BJ (cell line): ENCODE measurements at regions of chr13 and their contacts with region 1.

Region 1: DNA sequence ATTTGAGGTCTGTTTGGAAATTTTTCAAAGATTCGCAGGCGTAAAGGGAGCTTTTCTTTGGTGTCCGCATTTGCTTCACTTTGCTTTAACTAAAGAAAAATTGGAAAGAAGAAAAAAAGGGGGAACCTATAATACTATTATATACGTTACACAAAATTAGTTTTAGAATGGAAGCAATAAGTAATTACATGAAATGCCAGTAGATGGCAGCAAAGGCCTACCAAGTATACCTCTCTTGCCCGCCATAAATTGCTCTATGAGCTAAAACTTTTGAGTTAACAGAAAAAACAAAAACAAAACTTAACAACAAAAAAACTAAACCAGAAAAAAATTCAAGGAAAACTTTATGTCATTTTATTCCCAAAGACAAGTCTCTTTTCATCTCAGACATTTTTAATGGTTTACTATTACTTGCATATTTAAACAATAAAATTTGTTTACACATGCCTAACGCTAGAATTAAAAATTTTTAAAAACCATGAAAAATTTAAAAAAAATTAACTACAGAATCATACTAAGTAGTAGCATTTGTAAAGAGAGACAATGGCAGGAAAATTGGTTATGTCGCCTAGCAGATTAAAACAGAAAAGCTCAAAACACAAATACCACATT is 271.4 kb downstream of the NALCN start:
- DNase-seq: no peak
- H3K4me3 ChIP-seq: no peak overlapping the region
- H3K27me3 ChIP-seq: peaks cover 2% of the 10 kb centered on the region
- CTCF ChIP-seq: peak; percentile 53

Region 2: DNA sequence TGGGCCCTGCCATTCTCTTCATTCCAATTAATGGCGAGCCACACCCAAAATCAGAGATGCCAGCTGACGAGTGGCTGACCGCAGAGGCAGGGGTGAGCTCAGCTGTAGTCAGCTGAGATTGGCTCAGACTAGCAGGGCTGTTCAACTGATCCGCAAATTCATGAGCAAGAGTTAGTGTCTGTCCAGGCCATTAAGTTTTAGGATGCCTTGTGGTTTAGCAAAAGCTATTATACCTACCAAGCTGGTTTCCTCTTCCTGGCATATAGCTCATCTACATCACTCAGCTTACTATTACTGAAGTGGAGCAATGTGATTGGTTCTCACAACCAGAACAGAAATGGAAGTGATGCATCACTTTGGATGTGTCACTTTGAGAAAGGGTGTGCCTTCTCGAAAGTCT is 122.7 kb after region 1 on chr13:
- CTCF ChIA-PET with region 1: no interaction called
- POLR2A ChIA-PET with region 1: no interaction called
- DNase-seq: no peak
- H3K4me3 ChIP-seq: no peak overlapping the region
- H3K27me3 ChIP-seq: no peaks in the 10 kb centered on the region
- CTCF ChIP-seq: no peak

Region 3: GRCh38 chr13:101474419-101474957 is 329.6 kb after region 1 on chr13:
- CTCF ChIA-PET with region 1: interaction called, 63 read pairs
- POLR2A ChIA-PET with region 1: no interaction called
- DNase-seq: peak; percentile 43
- H3K4me3 ChIP-seq: no peak overlapping the region
- H3K27me3 ChIP-seq: no peaks in the 10 kb centered on the region
- CTCF ChIP-seq: peak; percentile 66

Region 4: DNA sequence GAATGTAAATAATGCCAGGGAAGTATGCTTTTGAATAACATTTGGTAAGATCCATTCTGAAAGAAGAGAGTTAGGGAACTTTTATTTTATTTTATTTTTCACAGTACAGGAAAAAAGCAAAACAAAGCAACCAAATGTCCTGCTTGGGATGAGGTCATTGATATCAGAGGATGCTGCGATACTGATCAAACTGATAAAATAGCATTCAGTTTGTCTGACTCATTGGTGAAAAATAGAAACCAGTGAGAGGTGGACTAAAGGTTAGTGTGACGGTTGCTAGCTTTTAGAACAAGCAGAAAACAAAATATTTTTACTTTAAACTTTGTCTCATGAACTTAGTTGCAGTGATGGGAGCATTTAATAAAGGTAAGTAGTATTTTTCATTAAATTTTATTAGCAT is 344.7 kb after region 1 on chr13:
- CTCF ChIA-PET with region 1: interaction called, 16 read pairs
- POLR2A ChIA-PET with region 1: no interaction called
- DNase-seq: no peak
- H3K4me3 ChIP-seq: no peak overlapping the region
- H3K27me3 ChIP-seq: no peaks in the 10 kb centered on the region
- CTCF ChIP-seq: no peak

Region 5: DNA sequence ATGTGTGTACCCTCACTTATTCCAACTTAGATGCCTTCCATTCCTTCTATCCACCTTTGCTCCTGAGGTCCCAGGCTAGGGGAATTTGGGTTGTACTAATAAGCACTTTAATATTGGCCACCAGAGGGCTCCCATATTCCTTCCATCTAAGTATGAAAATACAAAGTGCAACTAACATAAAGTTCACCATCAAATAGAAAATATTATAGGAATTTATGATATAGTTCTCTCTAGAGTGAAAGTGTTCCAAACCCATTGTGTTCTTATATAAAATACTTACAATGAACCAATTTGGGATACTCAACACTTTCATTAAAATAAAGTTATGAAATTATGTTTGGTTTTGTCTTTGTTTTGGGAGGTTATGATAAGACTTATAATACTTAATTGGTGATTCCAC is 369.9 kb after region 1 on chr13:
- CTCF ChIA-PET with region 1: interaction called, 10 read pairs
- POLR2A ChIA-PET with region 1: no interaction called
- DNase-seq: no peak
- H3K4me3 ChIP-seq: no peak overlapping the region
- H3K27me3 ChIP-seq: no peaks in the 10 kb centered on the region
- CTCF ChIP-seq: peak; percentile 70

Region 6: GRCh38 chr13:101757446-101758039 is 612.6 kb after region 1 on chr13:
- CTCF ChIA-PET with region 1: interaction called, 28 read pairs
- POLR2A ChIA-PET with region 1: no interaction called
- DNase-seq: no peak
- H3K4me3 ChIP-seq: no peak overlapping the region
- H3K27me3 ChIP-seq: peaks cover 2% of the 10 kb centered on the region; the same call in 1 of the 2 replicates
- CTCF ChIP-seq: peak; percentile 57